ENCODE measurements at regions of chr6 and their contacts with region 1.

Region 1: GRCh38 chr6:14984519-14984853 is 261.4 kb upstream of the JARID2 start:
- DNase-seq: no peak

Region 2: GRCh38 chr6:14831937-14832336 is 152.5 kb before region 1 on chr6:
- intact Hi-C with region 1: no loop called
- DNase-seq: no peak

Region 3: DNA sequence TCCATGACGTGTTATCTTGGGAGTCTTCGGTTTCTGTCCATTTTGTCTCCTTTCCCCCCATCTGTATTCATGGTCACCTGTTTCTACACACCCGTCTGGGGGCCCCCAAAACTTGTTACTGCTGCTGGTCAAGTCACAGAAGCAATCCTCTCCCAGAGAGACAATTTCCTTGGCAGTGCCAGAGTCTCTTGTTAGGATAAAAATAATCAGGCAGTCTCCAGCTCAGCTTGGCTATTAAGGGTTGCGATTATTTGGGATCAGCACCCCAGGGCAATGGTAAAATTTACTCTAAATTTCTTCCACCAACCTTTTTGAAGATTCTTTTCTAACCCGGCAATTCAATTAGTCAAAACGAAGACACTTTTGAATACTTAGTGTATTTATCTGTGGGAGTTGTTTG is 32.3 kb after region 1 on chr6:
- intact Hi-C with region 1: loop called in 1 of 2 experiments (anchors 1 kb)
- DNase-seq: no peak

Measured in posterior vena cava (tissue), 2 donors.